Sciatic nerve (tissue), 2 donors: ENCODE measurements at regions of chr6 and their contacts with region 1.

Region 1: DNA sequence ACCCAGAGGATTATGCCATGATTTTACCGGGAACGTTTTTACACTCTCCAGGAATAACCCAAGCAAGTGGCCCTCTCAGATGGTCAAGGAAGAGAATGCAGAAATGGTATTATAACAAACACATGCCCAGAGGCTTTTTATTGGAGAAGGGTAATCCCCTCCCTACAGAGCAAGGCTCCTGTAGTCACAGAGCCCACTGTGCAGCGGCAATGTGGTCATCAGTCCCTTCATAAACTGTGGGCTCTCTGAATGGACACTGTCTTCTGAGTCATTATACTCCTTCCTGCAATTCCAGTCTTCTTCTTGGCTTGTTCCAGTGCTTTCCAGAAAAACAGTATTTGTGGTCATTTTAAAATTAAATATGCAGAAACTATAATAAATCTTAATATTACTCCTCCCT is 74.7 kb downstream of the LAMA4 start:
- DNase-seq: no peak
- ATAC-seq: peak; percentile 39

Region 2: GRCh38 chr6:112100561-112100960 is 79.1 kb before region 1 on chr6:
- intact Hi-C with region 1: no loop called
- DNase-seq: no peak
- ATAC-seq: no peak

Region 3: GRCh38 chr6:112253841-112254816 is 74.5 kb after region 1 on chr6 and contains the start of gene LAMA4:
- intact Hi-C with region 1: loop called (anchors 10 kb)
- DNase-seq: peak; percentile 69
- ATAC-seq: peak; percentile 80
- total RNA-seq, gene LAMA4: 332 TPM

Region 4: DNA sequence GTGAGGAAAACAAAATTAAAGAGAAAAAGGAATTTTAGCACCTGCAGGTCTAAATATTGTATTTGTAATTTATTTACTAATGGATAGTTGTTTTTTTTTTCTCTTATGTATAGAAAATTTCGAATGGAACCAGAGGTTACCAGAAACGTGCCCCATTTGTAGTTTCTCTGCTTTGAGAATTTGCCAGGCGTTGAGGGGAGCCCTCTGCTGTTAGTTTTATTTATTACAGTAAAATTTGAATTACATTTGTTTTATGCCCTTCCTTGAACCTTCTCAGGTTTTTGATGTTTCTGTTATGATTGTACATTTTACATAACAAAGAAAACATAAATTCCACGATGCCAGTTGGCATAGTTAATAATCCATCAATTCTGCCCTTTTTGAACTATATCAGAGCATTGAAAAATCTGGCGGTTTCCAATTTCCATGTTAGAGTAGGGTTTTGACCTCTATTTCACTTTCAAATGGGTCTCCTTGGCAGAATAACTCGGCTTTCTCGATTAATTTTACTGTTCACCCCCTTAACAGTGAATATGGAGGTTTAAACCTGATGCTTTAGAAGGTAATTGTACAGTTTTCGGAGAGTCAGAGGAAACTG is 132.4 kb after region 1 on chr6:
- intact Hi-C with region 1: loop called (anchors 2 kb)
- DNase-seq: no peak
- ATAC-seq: no peak

Region 5: DNA sequence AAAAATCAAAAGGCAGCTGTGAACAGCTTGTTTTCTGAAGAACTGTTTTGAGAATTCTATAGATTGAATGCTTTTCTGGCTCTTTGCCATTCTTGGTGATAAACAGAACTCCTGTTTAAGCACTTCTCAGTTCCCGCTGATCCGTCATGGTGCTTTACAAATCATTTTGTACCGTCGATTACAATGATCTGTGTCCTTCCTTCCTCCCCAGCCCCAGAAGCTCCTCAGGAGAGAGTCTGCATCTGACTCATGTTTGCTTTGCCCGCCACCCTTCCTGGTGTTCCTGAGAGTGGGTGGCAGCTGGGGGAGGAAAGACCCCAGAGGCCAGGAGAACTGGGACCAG is 1138.9 kb after region 1 on chr6:
- intact Hi-C with region 1: no loop called
- DNase-seq: no peak
- ATAC-seq: no peak